ENCODE measurements at regions of chr3 and their contacts with region 1.

Region 1: GRCh38 chr3:39038165-39038564 is 13.6 kb downstream of the SCN11A start:
- DNase-seq: no peak
- ATAC-seq: no peak
- H3K4me3 ChIP-seq: no peak overlapping the region
- H3K27ac ChIP-seq: no peak overlapping the region
- H3K4me1 ChIP-seq: no peaks in the 10 kb centered on the region
- H3K27me3 ChIP-seq: no peaks in the 10 kb centered on the region
- CTCF ChIP-seq: no peak

Region 2: GRCh38 chr3:38521391-38521987 is 516.7 kb before region 1 on chr3:
- intact Hi-C with region 1: loop called in 1 of 10 experiments (anchors 10 kb)
- DNase-seq: peak in 1 of 2 donors; percentile 70
- ATAC-seq: peak; percentile 45 to 78 (median 70)
- H3K4me3 ChIP-seq: no peak overlapping the region
- H3K27ac ChIP-seq: peak overlapping the region in 7 of 10 donors; percentile 12 to 75 (median 63)
- H3K4me1 ChIP-seq: peaks cover 0 to 37% (median 16%) of the 10 kb centered on the region in 9 donors
- H3K27me3 ChIP-seq: no peaks in the 10 kb centered on the region
- CTCF ChIP-seq: peak; percentile 80 to 95 (median 92)

Measured in heart right ventricle (tissue), 16 donors.